Left colon (tissue), 2 donors: ENCODE measurements at regions of chr11 and their contacts with region 1.

Region 1: GRCh38 chr11:11028017-11028692 is 170.3 kb upstream of the ZBED5 start:
- DNase-seq: peak; percentile 51 to 80
- ATAC-seq: peak; percentile 88

Region 2: GRCh38 chr11:11787305-11788062 is 759.3 kb after region 1 on chr11:
- intact Hi-C with region 1: loop called (anchors 5 to 10 kb)
- DNase-seq: peak; percentile 55 to 79
- ATAC-seq: peak; percentile 94